ENCODE measurements at regions of chr2 and their contacts with region 1.

Region 1: GRCh38 chr2:42230891-42231290 is 61.7 kb downstream of the EML4 start:
- DNase-seq: no peak
- ATAC-seq: no peak
- H3K4me3 ChIP-seq: no peak overlapping the region
- H3K27ac ChIP-seq: no peak overlapping the region
- H3K4me1 ChIP-seq: no peaks in the 10 kb centered on the region
- H3K27me3 ChIP-seq: no peaks in the 10 kb centered on the region
- CTCF ChIP-seq: no peak

Region 2: GRCh38 chr2:42210203-42210602 is 20.7 kb before region 1 on chr2:
- CTCF ChIA-PET with region 1: no interaction called
- POLR2A ChIA-PET with region 1: no interaction called
- intact Hi-C with region 1: loop called (anchors 2 kb)
- DNase-seq: no peak
- ATAC-seq: no peak
- H3K4me3 ChIP-seq: no peak overlapping the region
- H3K27ac ChIP-seq: no peak overlapping the region
- H3K4me1 ChIP-seq: no peaks in the 10 kb centered on the region
- H3K27me3 ChIP-seq: no peaks in the 10 kb centered on the region
- CTCF ChIP-seq: no peak

Region 3: GRCh38 chr2:42261518-42262195 is 30.8 kb after region 1 on chr2:
- CTCF ChIA-PET with region 1: no interaction called
- POLR2A ChIA-PET with region 1: no interaction called
- intact Hi-C with region 1: no loop called
- DNase-seq: no peak
- ATAC-seq: no peak
- H3K4me3 ChIP-seq: no peak overlapping the region
- H3K27ac ChIP-seq: no peak overlapping the region
- H3K4me1 ChIP-seq: no peaks in the 10 kb centered on the region
- H3K27me3 ChIP-seq: no peaks in the 10 kb centered on the region
- CTCF ChIP-seq: no peak

Measured in PC-3 (cell line).